ENCODE measurements at regions of chr12 and their contacts with region 1.

Region 1: GRCh38 chr12:47079468-47079980 is at the starts of genes AMIGO2 and PCED1B:
- DNase-seq: peak in 1 of 2 experiments; percentile 76
- ATAC-seq: peak; percentile 1 to 49
- H3K4me3 ChIP-seq: peak within 1 kb of the TSS; percentile 74
- H3K27ac ChIP-seq: peak within 1 kb of the TSS; percentile 97 to 100
- H3K4me1 ChIP-seq: peaks cover 42% of the 10 kb centered on the region
- CTCF ChIP-seq: no peak
- EP300 ChIP-seq: no peak; a peak in 1 of 5 replicates
- POLR2A ChIP-seq: 0 out of 2 replicates have a peak, but pooled peaks have one; percentile 28
- RAD21 ChIP-seq: peak; percentile 36 to 38; a peak in 4 of 5 replicates
- polyA plus RNA-seq, gene AMIGO2: 636 and 690 TPM in 2 replicates
- polyA plus RNA-seq, gene PCED1B: 74.6 and 92.2 TPM in 2 replicates

Region 2: DNA sequence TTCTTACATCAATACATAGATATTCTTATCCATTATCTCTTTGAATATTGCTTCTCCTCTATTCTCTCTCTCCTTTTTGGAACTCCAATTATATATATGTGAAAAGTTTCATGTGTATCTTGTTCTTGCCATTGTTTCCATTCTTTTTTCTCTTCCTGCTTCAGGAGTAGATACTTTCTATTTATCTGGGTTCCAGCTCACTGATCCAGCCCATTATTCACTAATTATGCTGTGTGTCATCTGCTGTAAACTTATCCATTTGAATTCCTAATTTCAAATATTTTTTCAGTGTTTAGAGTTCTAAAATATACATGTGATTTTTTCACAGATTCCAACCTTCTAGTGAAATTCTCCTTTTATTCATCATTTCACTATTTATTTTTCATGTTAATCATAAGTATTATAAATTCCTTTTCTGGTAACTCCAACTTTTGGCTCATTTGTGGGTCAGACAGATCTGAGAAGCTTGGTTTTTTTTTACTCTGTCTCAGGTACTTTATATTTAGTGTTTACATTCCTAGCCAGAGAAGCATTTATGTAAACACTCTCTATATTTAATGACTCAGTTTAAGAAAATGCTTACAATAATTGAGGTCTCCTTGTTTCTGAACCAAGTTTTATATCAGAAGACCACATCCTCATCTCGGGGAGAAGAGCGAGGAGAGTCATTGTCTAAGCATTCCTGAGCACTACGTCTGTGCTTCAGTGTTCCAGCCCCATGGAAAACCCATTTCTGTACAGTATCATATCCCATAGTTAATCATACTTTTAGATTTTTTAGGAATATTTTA is 16.1 kb after region 1 on chr12:
- CTCF ChIA-PET with region 1: interaction called, 17 read pairs
- POLR2A ChIA-PET with region 1: interaction called, 59 read pairs
- DNase-seq: peak in 1 of 2 experiments; percentile 91
- ATAC-seq: peak; percentile 77 to 90
- H3K4me3 ChIP-seq: peak overlapping the region; percentile 3; the same call in 1 of the 3 replicates
- H3K27ac ChIP-seq: peak overlapping the region; percentile 91
- H3K4me1 ChIP-seq: peaks cover 80% of the 10 kb centered on the region
- CTCF ChIP-seq: no peak
- EP300 ChIP-seq: peak; percentile 85 to 89; a peak in 4 of 5 replicates
- POLR2A ChIP-seq: no peak
- RAD21 ChIP-seq: peak; percentile 39 to 52

Region 3: DNA sequence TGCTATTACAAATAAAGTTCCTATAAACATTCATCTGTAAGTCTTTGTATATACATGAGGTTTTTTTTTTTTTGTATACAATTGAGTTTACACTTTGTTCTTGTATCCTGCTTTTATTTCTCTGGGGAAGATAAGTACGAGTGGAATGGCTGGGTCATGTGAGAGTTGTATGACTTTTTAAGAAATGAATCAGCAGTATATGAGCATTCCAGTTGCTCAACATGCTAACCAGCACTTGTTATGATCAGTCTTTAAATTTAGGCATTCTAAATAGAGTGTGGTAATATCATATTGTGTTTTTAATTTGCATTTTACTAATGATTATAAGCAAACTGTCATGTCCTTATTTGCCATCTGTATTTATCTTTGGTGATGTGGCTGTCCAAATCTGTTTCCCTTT is 44.9 kb after region 1 on chr12:
- CTCF ChIA-PET with region 1: no interaction called
- POLR2A ChIA-PET with region 1: no interaction called
- DNase-seq: no peak
- ATAC-seq: no peak
- H3K4me3 ChIP-seq: no peak overlapping the region
- H3K27ac ChIP-seq: no peak overlapping the region
- H3K4me1 ChIP-seq: peaks cover 34% of the 10 kb centered on the region
- CTCF ChIP-seq: no peak
- EP300 ChIP-seq: no peak
- POLR2A ChIP-seq: no peak
- RAD21 ChIP-seq: no peak

Region 4: DNA sequence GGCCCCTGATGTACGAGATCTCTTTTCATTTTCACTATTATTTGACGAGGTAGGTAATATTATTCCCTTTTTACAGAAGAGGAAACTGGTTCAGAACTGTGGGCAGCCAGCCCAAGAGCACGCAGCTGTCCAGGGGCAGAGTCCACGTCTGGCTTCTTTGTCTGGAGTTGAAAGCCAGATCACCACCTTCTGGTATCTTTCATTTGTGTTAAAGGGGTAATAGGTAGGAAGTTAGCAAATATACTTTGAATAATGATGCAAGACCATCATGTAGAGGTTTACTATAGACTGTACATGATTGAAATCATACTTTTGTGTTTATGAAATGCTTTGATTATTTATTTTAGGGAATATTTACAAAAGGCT is 144.3 kb after region 1 on chr12:
- CTCF ChIA-PET with region 1: interaction called, 6 read pairs
- POLR2A ChIA-PET with region 1: interaction called, 156 read pairs
- DNase-seq: peak in 1 of 2 experiments; percentile 95
- ATAC-seq: peak; percentile 65 to 73
- H3K4me3 ChIP-seq: peak overlapping the region; percentile 44
- H3K27ac ChIP-seq: peak overlapping the region; percentile 98 to 99
- H3K4me1 ChIP-seq: peaks cover 83% of the 10 kb centered on the region
- CTCF ChIP-seq: no peak
- EP300 ChIP-seq: peak in 1 of 2 experiments; percentile 17; a peak in 1 of 5 replicates
- POLR2A ChIP-seq: no peak
- RAD21 ChIP-seq: peak; percentile 24 to 34; a peak in 2 of 5 replicates

Region 5: GRCh38 chr12:47276621-47277309 is 197.2 kb after region 1 on chr12:
- CTCF ChIA-PET with region 1: interaction called, 4 read pairs
- POLR2A ChIA-PET with region 1: interaction called, 20 read pairs
- DNase-seq: peak in 1 of 2 experiments; percentile 85
- ATAC-seq: peak; percentile 40 to 49; a peak in 3 of 6 replicates
- H3K4me3 ChIP-seq: no peak overlapping the region
- H3K27ac ChIP-seq: peak overlapping the region; percentile 88 to 91
- H3K4me1 ChIP-seq: peaks cover 69% of the 10 kb centered on the region
- CTCF ChIP-seq: no peak
- EP300 ChIP-seq: no peak
- POLR2A ChIP-seq: no peak
- RAD21 ChIP-seq: no peak

Region 6: DNA sequence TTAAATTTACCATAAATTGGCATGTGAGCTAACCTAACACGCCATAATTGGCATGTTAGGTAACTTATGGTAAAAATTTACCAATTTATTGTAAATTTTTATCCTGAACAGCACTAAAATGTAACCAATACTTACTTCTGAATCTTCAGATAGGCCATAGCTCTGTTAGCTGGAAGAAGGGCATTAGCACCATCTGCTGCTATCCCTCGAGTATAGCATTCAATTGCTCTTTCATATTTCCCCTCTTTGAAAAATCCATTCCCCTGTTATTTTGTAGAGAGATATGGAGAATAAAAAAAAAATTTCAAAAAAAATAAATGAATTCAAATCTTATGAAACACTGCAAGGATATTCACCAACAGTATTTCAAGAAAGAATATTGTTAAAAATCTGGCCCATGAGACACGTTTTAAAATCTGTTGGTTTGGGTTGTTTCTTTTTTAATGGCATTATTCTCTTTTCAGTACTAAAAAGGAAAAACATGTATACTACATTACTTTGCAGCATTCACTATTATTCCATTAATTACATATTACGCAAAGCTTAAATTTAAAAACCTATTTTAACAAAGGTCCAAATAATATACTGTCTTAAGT is 607.2 kb after region 1 on chr12:
- CTCF ChIA-PET with region 1: interaction called, 12 read pairs
- POLR2A ChIA-PET with region 1: interaction called, 3 read pairs
- DNase-seq: peak; percentile 53 to 66
- ATAC-seq: peak; percentile 70 to 83
- H3K4me3 ChIP-seq: no peak overlapping the region
- H3K27ac ChIP-seq: peak overlapping the region; percentile 14 to 45; a peak in 3 of 6 replicates
- H3K4me1 ChIP-seq: peaks cover 3% of the 10 kb centered on the region; the same call in 1 of the 3 replicates
- CTCF ChIP-seq: peak; percentile 93
- EP300 ChIP-seq: no peak
- POLR2A ChIP-seq: no peak
- RAD21 ChIP-seq: peak; percentile 89 to 91

Measured in A549 (cell line).